IMR-90 (cell line): ENCODE measurements at regions of chr10 and their contacts with region 1.

Region 1: GRCh38 chr10:22010973-22011408 is 7.5 kb upstream of the DNAJC1 start:
- DNase-seq: peak; percentile 4
- ATAC-seq: peak; percentile 46; the same call in 1 of the 2 replicates
- H3K4me3 ChIP-seq: no peak overlapping the region
- H3K27ac ChIP-seq: no peak overlapping the region
- H3K4me1 ChIP-seq: no peaks in the 10 kb centered on the region
- H3K27me3 ChIP-seq: no peaks in the 10 kb centered on the region; the same call in 1 of the 2 replicates
- CTCF ChIP-seq: peak; percentile 48
- POLR2A ChIP-seq: no peak
- RAD21 ChIP-seq: peak; percentile 28; the same call in 1 of the 2 replicates

Region 2: GRCh38 chr10:21807180-21807579 is 203.8 kb before region 1 on chr10:
- CTCF ChIA-PET with region 1: no interaction called
- POLR2A ChIA-PET with region 1: no interaction called
- dilution Hi-C with region 1: no loop called
- in situ Hi-C with region 1: no loop called
- intact Hi-C with region 1: no loop called
- DNase-seq: no peak
- ATAC-seq: no peak
- H3K4me3 ChIP-seq: no peak overlapping the region
- H3K27ac ChIP-seq: no peak overlapping the region
- H3K4me1 ChIP-seq: peaks cover 1% of the 10 kb centered on the region; the same call in 1 of the 2 replicates
- H3K27me3 ChIP-seq: no peaks in the 10 kb centered on the region
- CTCF ChIP-seq: no peak
- POLR2A ChIP-seq: no peak
- RAD21 ChIP-seq: no peak

Region 3: DNA sequence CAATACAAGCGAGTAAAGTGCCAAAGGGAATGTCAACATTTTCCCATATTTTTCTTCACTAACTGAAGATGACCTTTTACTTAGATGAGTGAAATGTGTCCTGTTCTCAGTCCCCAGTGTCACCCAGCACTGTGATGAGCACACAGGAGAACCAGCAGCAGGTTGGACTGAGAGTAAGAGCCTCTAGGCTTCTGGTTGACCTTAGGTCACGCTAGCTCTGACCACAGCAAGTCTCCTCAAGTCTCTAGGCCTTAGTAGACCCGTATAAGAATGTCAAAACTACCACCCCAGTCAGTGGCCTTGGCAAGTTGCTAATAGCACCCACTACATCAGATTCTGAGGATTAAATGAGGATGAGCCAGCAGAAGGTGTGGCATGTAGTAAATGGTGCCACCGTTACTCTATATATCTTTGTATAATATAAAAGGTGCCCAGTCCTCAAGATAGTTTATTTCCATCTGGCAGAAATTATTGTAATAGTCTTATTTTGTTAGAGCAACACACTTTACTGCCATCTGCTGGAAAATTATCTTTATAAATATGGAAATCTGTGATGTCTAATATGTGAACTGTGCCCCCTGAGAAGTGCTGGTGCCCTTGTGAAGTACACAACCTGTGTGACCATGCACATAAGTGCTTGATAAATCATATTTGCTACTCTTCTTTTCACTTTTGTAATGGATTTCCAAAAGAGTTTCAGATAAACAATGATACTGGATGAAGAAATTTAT is 410.0 kb after region 1 on chr10:
- CTCF ChIA-PET with region 1: no interaction called
- POLR2A ChIA-PET with region 1: no interaction called
- dilution Hi-C with region 1: no loop called
- in situ Hi-C with region 1: loop called (anchors 25 kb)
- intact Hi-C with region 1: loop called (anchors 5 kb)
- DNase-seq: peak; percentile 16
- ATAC-seq: peak; percentile 32
- H3K4me3 ChIP-seq: no peak overlapping the region
- H3K27ac ChIP-seq: no peak overlapping the region
- H3K4me1 ChIP-seq: no peaks in the 10 kb centered on the region
- H3K27me3 ChIP-seq: peaks cover 2% of the 10 kb centered on the region; the same call in 1 of the 2 replicates
- CTCF ChIP-seq: peak; percentile 31; the same call in 1 of the 2 replicates
- POLR2A ChIP-seq: no peak
- RAD21 ChIP-seq: peak; percentile 38; the same call in 1 of the 2 replicates